Vagina (tissue), 2 donors: ENCODE measurements at regions of chr1 and their contacts with region 1.

Region 1: DNA sequence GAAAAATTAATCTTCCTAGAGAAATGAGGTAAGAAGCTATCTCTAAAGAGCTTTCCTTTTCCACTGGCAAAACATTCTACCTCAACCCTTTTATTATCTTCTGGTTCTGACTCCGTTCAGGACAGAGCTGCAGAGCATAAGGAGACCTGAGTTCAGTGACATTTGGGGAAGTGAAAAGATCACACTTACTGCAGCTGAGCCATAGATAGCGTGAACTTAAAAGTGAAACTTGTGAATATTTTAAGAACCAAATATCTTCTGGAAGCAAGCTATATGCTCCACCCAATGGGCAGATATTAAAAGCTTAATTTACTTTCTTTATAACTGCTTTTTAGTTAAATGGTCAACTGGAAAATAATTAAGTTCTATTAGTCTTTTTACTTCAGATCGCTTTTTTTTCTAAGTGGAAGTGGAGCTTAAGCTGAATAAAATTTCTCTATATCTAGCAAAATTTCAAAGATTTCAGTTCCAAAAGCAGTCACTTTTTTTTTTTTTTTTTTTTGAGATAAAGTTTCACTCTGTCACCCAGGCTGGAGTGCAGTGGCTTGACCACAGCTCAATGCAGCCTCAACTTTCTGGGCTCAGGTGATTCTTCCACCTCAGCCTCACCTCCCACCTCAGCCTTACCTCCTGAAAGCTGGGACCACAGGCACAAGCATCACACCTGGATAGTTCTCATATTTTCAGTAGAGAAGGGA is 11.9 kb downstream of the PTPN22 start:
- DNase-seq: no peak
- H3K4me3 ChIP-seq: no peak overlapping the region
- H3K27ac ChIP-seq: no peak overlapping the region
- H3K4me1 ChIP-seq: no peaks in the 10 kb centered on the region
- H3K27me3 ChIP-seq: no peaks in the 10 kb centered on the region
- CTCF ChIP-seq: no peak
- POLR2A ChIP-seq: no peak

Region 2: GRCh38 chr1:112114540-112114939 is 1745.1 kb before region 1 on chr1:
- intact Hi-C with region 1: loop called (anchors 5 kb)
- DNase-seq: no peak
- H3K4me3 ChIP-seq: no peak overlapping the region
- H3K27ac ChIP-seq: no peak overlapping the region
- H3K4me1 ChIP-seq: peaks cover 7% of the 10 kb centered on the region
- H3K27me3 ChIP-seq: no peaks in the 10 kb centered on the region
- CTCF ChIP-seq: no peak
- POLR2A ChIP-seq: no peak

Region 3: DNA sequence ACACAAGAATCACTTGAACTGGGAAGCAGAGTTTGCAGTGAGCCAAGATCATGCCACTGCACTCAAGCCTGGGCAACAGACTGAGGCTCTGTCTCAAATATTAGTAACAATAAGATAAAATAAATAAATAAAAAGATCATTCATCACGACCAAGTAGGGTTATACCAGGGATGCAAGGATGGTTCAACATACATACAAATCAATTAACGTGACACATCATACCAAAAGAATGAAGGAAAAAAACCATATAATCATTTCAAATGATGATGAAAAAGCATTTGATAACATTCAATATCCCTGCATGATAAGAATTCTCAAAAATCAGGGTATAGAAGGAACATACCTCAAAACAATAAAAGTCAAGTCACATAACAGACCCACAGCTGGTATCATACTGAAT is 138.6 kb before region 1 on chr1:
- intact Hi-C with region 1: no loop called
- DNase-seq: no peak
- H3K4me3 ChIP-seq: no peak overlapping the region
- H3K27ac ChIP-seq: no peak overlapping the region
- H3K4me1 ChIP-seq: no peaks in the 10 kb centered on the region
- H3K27me3 ChIP-seq: no peaks in the 10 kb centered on the region
- CTCF ChIP-seq: no peak
- POLR2A ChIP-seq: no peak